BJ (cell line): ENCODE measurements at regions of chr11 and their contacts with region 1.

Region 1: DNA sequence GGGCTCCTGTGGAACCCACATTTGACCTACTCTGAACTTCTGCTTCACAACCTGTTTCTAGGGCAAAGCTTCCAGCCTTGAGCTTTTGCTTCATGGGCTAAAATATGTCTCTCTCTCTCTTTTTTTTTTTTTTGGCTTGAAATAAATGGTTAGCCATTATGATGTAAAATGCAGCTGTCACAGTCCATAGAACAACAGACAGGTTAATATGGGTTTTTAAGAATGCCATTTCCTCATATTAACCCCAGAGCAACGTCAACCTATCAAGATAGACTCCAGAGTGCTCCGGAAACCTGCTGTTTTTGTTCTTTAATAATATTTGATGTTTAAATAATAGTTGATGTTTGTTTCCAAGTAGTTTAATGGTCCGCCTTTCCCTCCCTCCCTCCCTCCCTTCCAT is 285.6 kb downstream of the TENM4 start:
- DNase-seq: no peak
- H3K4me3 ChIP-seq: no peak overlapping the region
- H3K27me3 ChIP-seq: no peaks in the 10 kb centered on the region
- CTCF ChIP-seq: no peak

Region 2: GRCh38 chr11:79167510-79168188 is 12.4 kb after region 1 on chr11:
- CTCF ChIA-PET with region 1: interaction called, 14 read pairs
- POLR2A ChIA-PET with region 1: interaction called, 11 read pairs
- DNase-seq: no peak
- H3K4me3 ChIP-seq: no peak overlapping the region
- H3K27me3 ChIP-seq: no peaks in the 10 kb centered on the region
- CTCF ChIP-seq: no peak